Head of caudate nucleus (tissue), 42 donors: ENCODE measurements at regions of chr10 and their contacts with region 1.

Region 1: DNA sequence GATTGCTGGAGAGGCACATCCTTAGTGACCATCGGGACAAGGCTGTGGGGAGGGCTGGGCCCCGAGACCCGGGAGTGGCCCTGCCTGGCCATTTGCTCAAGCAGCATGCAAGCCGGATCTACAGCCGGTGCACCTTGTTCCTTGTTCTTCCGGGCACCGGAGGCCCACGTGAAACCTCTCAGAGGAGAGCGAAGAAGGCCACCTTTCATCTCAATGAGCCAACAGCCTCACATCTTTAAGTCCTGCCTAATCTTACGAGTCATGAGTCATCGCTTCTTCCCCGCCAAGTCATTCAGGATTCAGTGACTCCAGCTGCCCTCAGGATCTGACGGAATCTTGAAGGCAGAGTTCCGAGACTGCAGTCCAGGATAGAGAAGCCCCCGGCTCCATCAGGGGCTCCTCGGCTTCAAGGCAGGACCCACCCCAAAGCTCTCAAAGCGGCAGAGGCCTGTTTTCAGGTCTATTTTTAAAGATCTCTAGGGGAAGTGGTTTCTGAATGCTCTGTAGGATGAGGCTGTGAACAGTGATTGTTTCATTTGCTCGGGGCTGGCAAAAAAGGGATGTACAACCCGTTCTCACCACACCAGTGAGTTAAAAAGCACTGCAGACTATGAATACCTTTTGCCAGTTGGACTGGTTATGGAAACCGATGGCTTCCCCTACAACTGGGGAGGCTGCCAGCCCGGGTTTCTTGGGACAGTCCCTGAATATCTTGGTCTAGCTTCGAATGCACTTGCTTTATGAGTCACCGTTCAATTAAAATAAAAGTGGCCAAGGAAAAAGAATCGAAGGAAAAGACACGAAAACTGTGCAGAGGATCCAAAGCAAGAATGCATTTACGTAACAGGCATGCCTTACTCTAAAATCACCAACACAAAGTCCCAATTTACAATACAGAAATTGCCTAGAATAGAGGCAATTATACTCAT is 57.2 kb upstream of the ECHDC3 start:
- DNase-seq: peak in 39 of 42 donors; percentile 25 to 87 (median 52)

Region 2: GRCh38 chr10:11525503-11525902 is 159.5 kb before region 1 on chr10:
- intact Hi-C with region 1: no loop called
- DNase-seq: no peak

Region 3: DNA sequence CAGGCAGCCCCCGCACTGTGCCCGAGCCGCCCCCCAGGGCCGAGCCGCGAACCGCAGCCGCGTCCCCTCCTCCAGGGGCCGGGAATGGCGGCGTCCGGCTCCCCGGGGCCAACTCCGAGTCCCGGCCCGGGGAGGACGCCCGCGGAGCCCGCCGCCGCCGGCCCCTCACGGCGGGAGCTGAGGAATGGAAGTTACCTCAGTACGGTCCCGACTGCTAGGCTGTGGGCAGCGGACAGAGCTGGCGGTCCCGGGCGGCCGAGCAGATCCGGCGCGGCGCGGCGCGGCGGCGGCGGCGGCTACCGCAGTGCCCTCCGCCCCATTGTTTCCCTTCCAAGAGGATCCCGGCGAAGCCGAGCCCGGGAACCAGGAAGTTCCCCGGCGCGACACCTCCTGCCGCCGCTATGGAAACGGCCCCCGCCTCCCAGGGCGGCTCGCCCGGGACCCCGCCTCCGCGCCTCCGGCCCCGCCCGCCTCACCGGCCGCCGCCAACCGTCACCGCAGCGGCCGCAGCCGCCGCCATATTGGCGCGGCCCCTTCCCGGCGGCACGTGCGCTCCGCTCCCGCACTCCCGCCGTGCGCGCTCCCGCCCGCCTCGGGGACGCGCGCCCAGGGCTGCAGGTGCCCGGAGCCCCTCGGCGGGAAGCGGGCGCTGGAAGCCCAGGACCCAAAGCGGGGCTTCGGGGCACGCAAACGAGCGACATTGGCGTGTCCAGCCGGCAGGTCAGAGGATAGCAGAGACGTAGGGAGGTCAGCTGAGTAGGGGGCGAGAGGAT is 73.5 kb before region 1 on chr10 and contains the start of gene USP6NL:
- intact Hi-C with region 1: loop called (anchors 10 kb)
- DNase-seq: peak; percentile 43 to 91 (median 83)

Region 4: DNA sequence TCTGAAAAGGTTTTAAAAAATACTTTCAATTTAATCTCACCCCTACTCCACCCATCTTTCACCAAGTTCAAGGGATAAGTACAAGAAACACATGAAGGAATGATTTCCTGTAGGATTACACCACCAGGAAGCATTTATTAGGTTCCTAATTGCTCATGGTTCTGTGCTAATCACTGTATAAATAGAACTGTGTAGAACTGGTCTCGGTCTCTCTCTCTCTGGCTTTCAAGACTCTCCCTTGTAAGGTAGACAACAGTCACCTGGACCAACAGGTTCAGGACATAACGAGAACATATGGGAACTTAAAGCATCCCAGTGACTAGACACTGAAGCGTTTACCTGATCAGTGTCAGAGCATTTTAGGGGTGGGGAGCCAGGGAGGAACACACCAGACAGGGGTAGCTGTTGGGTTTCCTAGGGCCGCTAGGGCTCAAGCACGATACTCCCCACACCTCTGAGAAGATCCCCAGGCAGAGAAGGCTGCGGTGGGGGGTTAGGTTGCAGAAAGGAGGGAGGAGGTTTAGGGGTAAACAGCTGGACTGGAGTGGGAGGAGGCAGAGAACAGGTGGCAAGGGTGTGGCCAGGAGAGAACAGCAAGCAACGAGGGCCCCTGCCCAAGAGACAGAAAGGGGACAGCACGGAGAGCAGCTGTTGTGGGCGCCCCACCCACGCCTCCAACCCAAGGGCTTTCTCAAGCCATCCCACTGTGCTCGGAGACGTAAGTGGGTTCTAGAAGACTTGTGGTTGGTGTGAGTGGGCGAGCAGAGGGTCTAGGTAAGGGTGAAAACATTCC is 21.0 kb before region 1 on chr10:
- intact Hi-C with region 1: no loop called
- DNase-seq: peak in 1 of 42 donors; percentile 24